ENCODE measurements at regions of chr6 and their contacts with region 1.

Region 1: GRCh38 chr6:2749969-2750600 is 637 bp downstream of the MYLK4 start:
- DNase-seq: peak; percentile 51
- CTCF ChIP-seq: peak; percentile 61

Region 2: GRCh38 chr6:2505624-2506023 is 244.5 kb before region 1 on chr6:
- CTCF ChIA-PET with region 1: no interaction called
- POLR2A ChIA-PET with region 1: no interaction called
- DNase-seq: no peak
- CTCF ChIP-seq: no peak

Region 3: DNA sequence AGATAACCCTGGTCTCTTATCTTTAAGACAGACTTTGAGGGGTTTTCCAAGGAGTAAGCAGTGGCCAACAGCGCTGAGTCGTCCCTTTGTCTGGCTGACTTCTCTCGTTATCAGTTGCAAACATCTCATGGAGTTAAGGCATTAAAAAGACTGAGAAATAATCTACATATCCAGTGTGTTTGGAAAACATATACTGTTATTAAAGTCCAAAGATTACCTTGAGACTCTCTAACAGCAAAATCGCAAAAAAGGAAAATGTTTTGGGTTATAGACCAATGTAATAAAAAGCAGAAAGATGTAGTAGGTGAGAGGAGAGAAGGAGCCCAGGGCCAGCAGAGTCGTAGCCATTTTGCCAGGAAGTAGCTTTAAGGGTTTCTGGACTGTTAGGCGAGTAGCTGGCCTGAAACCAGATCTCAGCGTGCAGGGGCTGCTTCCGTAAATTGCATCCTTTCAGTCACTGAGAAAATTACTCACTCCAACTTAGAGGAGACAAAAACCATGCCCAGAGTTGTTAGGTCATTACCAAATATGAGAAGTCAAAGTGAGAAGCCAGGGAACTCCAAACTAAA is 24.0 kb before region 1 on chr6:
- CTCF ChIA-PET with region 1: interaction called, 16 read pairs
- POLR2A ChIA-PET with region 1: no interaction called
- DNase-seq: peak; percentile 60
- CTCF ChIP-seq: no peak

Region 4: GRCh38 chr6:2733324-2733723 is 16.8 kb before region 1 on chr6:
- CTCF ChIA-PET with region 1: interaction called, 108 read pairs
- POLR2A ChIA-PET with region 1: no interaction called
- DNase-seq: peak; percentile 79
- CTCF ChIP-seq: no peak

Region 5: DNA sequence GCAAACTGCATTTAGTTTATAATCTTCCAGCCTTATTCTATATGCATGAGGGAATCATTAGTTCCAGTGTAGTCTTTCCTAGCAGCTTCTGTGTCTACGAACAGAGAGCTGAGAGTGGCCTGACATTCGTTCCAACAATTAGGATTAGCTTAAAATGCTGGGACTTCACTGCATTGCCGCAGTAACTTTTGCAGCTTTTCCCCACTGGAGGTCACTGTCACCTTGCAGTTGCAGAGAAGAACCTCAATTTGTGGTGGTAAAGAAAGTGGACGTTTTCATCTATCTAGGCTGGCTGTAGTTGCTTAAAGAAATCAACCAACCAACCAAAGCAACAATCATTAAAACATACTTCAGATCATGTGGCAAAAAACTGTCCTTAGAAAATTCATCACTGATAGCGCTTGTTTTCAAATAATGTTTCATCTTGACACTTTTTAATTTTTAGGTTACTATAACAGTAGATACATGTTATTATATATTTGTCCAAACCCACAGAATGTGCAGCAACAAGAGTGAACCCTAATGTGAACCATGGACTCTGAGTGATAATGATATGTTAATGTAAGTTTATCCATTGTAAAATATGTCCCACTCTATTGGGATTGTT is 11.6 kb before region 1 on chr6:
- CTCF ChIA-PET with region 1: interaction called, 108 read pairs
- POLR2A ChIA-PET with region 1: no interaction called
- DNase-seq: peak; percentile 39
- CTCF ChIP-seq: peak; percentile 79

Region 6: GRCh38 chr6:2765166-2765895 is 15.2 kb after region 1 on chr6 and contains the start of gene WRNIP1:
- CTCF ChIA-PET with region 1: interaction called, 127 read pairs
- POLR2A ChIA-PET with region 1: no interaction called
- DNase-seq: peak; percentile 96
- CTCF ChIP-seq: peak; percentile 67

Region 7: DNA sequence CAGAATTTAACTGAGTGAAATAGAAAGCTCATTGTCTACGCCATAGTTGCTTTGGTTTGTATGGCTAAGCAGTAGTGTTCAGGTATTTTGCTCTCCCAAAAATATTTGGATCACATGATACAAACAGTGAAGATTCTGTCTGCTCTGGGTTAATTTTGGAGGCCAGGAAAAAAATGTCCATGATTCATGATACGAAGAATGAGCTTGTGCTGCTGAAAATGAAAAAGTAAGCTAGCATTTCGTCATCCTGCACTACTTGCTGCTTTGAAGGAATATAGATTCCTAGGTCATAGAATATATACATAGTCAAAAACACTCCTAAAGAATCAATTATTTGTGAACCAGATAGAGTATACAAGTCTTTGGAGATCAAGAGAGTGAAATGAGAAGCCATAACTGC is 23.4 kb after region 1 on chr6:
- CTCF ChIA-PET with region 1: interaction called, 23 read pairs
- POLR2A ChIA-PET with region 1: no interaction called
- DNase-seq: no peak
- CTCF ChIP-seq: no peak